MCF 10A (cell line): ENCODE measurements at regions of chr14 and their contacts with region 1.

Region 1: DNA sequence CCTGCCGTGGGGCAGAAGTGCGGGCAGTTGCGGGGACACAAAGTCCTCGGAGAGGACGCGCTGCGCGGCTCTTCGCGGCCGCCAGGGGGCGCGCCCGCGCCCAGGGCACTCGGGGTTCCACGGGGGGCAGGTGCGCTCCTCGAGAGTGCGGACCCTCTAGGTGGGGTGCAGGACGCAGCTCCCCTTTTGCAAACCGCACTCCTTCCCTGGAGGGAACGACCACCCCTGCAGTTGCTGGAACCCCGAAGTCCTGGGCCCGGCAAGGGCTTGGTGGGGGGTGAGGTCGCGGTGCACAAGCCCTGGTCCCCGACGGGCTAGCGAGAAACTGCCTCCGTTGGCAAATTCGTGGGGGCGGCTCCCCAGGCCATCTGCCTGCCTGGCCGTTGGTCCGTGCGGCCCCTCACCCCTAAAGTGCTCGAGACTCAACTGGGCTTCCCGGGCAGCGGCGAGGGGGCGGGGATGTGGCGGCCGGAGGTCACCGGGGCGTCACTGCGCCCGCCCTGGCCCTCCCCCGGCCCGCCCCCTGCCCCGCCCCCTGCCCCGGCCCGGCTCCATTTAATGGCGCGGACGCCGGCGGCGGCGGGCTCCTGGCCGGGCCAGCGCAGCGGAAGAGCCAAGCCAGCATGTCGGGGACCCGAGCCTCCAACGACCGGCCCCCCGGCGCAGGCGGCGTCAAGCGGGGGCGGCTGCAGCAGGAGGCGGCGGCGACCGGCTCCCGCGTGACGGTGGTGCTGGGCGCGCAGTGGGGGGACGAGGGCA is at the start of gene ADSS1:
- DNase-seq: peak; percentile 52
- H3K4me3 Mint-ChIP-seq: peak within 1 kb of the TSS; percentile 58
- H3K27ac Mint-ChIP-seq: no peak within 1 kb of the TSS
- H3K4me1 Mint-ChIP-seq: no peaks in the 10 kb centered on the region
- H3K27me3 Mint-ChIP-seq: no peaks in the 10 kb centered on the region
- CTCF ChIP-seq: peak; percentile 96
- total RNA-seq, gene ADSS1: 2.9 and 5.2 TPM in 2 replicates

Region 2: GRCh38 chr14:104665657-104666522 is 57.9 kb before region 1 on chr14:
- CTCF ChIA-PET with region 1: no interaction called
- POLR2A ChIA-PET with region 1: no interaction called
- intact Hi-C with region 1: no loop called
- DNase-seq: peak; percentile 48
- H3K4me3 Mint-ChIP-seq: no peak overlapping the region
- H3K27ac Mint-ChIP-seq: no peak overlapping the region
- H3K4me1 Mint-ChIP-seq: no peaks in the 10 kb centered on the region
- H3K27me3 Mint-ChIP-seq: peaks cover 9% of the 10 kb centered on the region
- CTCF ChIP-seq: peak; percentile 15

Region 3: DNA sequence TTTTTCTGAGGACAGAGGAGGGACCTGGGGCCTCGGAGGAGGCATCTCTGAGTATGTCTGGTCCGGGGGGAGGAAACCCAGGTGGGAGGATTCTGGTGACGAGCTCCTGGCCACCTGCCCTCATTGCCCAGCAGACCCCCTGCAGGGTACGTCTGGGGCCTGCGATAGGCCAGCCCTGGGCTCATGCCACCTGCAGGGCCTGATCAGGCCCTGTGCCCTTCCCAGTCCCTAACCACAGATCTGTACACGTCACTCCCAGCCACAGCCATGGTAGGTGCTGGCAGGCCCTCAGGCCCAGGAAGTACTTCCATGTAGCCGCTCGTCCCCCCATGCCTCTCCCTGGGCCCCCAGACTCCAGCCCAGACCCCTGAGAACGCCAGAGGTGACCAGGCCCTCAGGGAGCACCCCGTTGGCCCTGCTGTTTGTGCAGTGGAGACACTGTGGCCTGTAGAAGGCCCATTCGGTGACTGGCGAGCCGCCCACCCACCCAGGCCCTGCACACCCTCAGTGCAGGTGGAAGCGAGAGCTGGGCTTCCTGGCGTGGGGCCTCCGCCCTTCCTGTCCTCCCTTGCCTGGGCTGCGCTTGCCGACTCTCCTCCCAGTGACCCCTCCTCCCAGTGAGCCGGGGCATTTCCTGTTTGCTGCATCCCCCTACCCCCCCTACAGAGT is 28.7 kb before region 1 on chr14:
- CTCF ChIA-PET with region 1: interaction called, 10 read pairs
- POLR2A ChIA-PET with region 1: no interaction called
- intact Hi-C with region 1: no loop called
- DNase-seq: peak; percentile 80
- H3K4me3 Mint-ChIP-seq: peak overlapping the region; percentile 12
- H3K27ac Mint-ChIP-seq: peak overlapping the region; percentile 74
- H3K4me1 Mint-ChIP-seq: peaks cover 23% of the 10 kb centered on the region
- H3K27me3 Mint-ChIP-seq: no peaks in the 10 kb centered on the region
- CTCF ChIP-seq: no peak

Region 4: GRCh38 chr14:104708606-104709268 is 15.1 kb before region 1 on chr14:
- CTCF ChIA-PET with region 1: interaction called, 11 read pairs
- POLR2A ChIA-PET with region 1: interaction called, 4 read pairs
- intact Hi-C with region 1: no loop called
- DNase-seq: peak; percentile 72
- H3K4me3 Mint-ChIP-seq: no peak overlapping the region
- H3K27ac Mint-ChIP-seq: no peak overlapping the region
- H3K4me1 Mint-ChIP-seq: peaks cover 6% of the 10 kb centered on the region
- H3K27me3 Mint-ChIP-seq: no peaks in the 10 kb centered on the region
- CTCF ChIP-seq: peak; percentile 94

Region 5: DNA sequence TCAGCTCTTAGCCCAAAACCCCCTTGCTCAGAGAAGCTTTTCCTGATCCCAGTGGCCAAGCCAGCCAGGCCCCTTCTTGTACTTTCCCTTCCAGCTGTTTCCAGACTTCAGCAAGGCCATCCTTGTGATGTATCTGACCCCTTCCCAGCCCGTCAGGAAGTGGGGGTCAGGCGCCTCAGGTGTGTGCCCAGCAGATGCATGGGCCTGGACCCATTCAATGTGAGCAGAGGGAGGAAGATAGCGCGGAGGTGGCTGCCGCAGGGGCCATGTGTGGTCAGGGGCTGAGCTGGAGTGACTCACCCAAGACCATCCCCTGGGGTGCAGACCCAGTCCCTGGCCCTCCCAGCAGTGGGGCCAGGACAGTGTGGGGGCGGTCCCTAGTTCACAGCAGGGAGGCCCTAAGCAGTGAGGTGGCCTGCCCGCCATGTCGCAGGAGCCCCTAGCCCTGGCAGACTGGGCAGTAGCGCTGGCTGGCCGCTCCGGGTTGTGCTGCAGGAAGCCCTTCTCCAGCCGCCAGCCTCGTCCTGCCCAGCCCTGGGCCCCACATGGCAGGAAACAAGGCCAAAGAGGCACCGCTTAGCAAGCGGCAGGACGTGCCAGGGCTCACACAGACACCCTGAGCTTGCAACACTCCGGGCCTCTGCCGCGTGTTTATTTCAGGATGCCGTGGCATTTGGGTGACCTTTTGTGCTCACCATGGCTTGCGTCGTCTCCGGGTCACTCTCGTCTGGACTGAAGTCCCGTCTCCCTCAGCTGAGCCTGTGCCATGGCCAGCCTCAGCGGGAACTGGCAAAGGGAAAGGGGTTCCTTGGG is 12.2 kb after region 1 on chr14:
- CTCF ChIA-PET with region 1: interaction called, 36 read pairs
- POLR2A ChIA-PET with region 1: interaction called, 5 read pairs
- intact Hi-C with region 1: no loop called
- DNase-seq: peak; percentile 81
- H3K4me3 Mint-ChIP-seq: peak overlapping the region; percentile 11
- H3K27ac Mint-ChIP-seq: peak overlapping the region; percentile 79
- H3K4me1 Mint-ChIP-seq: peaks cover 21% of the 10 kb centered on the region
- H3K27me3 Mint-ChIP-seq: no peaks in the 10 kb centered on the region
- CTCF ChIP-seq: no peak